ENCODE measurements at regions of chr14 and their contacts with region 1.

Region 1: DNA sequence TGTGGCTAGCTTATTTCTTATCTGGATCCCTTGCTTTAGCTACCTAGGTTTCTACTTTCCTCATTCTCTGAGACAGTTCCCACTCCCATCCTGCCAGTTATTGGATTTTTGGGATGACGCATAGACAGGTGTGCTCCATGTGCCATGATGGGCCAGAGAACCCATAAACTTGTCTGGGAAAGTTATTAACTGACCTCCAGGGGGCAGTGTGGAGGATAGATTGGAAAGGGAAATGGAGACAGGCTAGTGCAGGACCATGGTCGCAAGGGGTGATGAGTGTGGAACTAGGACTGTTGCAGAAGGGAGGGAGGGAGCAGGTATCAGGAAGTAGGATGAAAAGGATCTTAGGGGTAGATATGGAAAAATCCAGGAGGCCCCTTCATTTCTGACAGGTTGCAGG is 80.3 kb downstream of the ESRRB start:
- DNase-seq: peak in 5 of 7 donors; percentile 34 to 58 (median 45)
- H3K4me3 ChIP-seq: no peak overlapping the region
- H3K27ac ChIP-seq: no peak overlapping the region
- H3K4me1 ChIP-seq: no peaks in the 10 kb centered on the region
- H3K27me3 ChIP-seq: no peaks in the 10 kb centered on the region
- CTCF ChIP-seq: peak; percentile 22 to 52 (median 48)
- POLR2A ChIP-seq: no peak

Region 2: DNA sequence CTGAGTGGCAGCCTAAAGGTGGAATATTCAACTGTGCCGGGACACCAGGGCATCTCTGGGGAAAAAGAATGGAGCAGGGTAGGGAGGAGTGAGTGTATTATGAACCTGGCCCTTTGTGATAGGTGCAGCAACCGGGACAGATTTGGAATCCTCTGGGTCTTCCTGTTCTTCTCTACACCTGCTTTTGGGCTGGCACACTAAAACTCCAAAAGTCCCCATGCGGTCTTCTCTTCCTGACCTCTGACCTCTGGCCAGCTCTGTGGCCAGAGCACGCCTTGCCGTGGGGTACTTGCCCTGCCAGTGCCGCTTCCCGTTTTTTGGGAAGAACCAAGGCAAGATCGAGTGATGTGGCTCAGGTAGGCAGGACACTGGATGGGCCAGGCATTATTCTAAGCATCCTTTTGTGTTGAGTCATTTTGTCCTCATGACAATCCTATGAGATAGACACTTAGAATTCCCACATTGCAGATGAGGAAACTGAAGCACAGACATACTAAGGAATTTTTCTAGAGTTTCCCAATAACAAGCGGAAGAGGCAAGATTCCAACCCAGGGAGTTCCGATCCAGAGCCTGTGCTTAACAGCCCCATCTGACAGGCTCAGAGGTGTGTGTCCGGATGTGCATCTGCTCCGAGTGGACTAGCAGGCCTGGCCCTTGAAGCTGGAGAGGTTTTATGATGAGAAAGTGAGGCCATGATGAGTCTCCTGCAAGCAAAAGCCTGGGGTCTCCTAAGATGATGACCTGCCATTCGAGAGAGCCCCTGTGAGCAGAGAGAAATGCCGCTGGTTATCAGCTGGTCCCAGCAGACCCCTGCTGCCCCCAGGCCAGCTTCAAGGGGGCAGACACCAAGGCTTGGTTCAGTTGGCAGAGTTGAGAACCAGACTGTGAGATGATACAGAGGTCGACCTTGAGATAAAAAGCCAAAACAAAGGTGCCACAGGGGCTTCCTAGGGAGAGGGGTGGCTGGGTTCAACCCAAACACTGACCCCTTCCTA is 148.1 kb before region 1 on chr14:
- intact Hi-C with region 1: no loop called
- DNase-seq: no peak
- H3K4me3 ChIP-seq: no peak overlapping the region
- H3K27ac ChIP-seq: no peak overlapping the region
- H3K4me1 ChIP-seq: no peaks in the 10 kb centered on the region
- H3K27me3 ChIP-seq: no peaks in the 10 kb centered on the region
- CTCF ChIP-seq: no peak
- POLR2A ChIP-seq: no peak

Region 3: GRCh38 chr14:76647697-76648298 is 191.6 kb after region 1 on chr14:
- intact Hi-C with region 1: loop called in 1 of 2 experiments (anchors 5 kb)
- DNase-seq: peak; percentile 18 to 55 (median 38)
- H3K4me3 ChIP-seq: no peak overlapping the region
- H3K27ac ChIP-seq: no peak overlapping the region
- H3K4me1 ChIP-seq: no peaks in the 10 kb centered on the region
- H3K27me3 ChIP-seq: peaks cover 3% of the 10 kb centered on the region
- CTCF ChIP-seq: peak; percentile 51 to 72 (median 66)
- POLR2A ChIP-seq: no peak

Measured in adrenal gland (tissue), 19 donors.